Activated CD8-positive, alpha-beta T cell treated with anti-CD3 and anti-CD28 coated beads, Interleukin-2, amount 10 ng/mL, durations not matched to agents 7 days and 5 days (primary cell): ENCODE measurements at regions of chr12 and their contacts with region 1.

Region 1: GRCh38 chr12:57744777-57745484 is at the start of gene TSPAN31:
- DNase-seq: peak; percentile 98
- ATAC-seq: peak; percentile 80
- H3K4me3 Mint-ChIP-seq: peak within 1 kb of the TSS; percentile 92
- H3K27ac Mint-ChIP-seq: peak within 1 kb of the TSS; percentile 94
- H3K4me1 Mint-ChIP-seq: peaks cover 53% of the 10 kb centered on the region
- H3K27me3 Mint-ChIP-seq: no peaks in the 10 kb centered on the region
- total RNA-seq, gene TSPAN31: 12.9 to 13.3 TPM

Region 2: GRCh38 chr12:56947633-56948456 is 797.1 kb before region 1 on chr12:
- CTCF ChIA-PET with region 1: no interaction called
- POLR2A ChIA-PET with region 1: no interaction called
- DNase-seq: no peak
- ATAC-seq: no peak
- H3K4me3 Mint-ChIP-seq: no peak overlapping the region
- H3K27ac Mint-ChIP-seq: no peak overlapping the region
- H3K4me1 Mint-ChIP-seq: no peaks in the 10 kb centered on the region
- H3K27me3 Mint-ChIP-seq: peaks cover 31% of the 10 kb centered on the region

Region 3: DNA sequence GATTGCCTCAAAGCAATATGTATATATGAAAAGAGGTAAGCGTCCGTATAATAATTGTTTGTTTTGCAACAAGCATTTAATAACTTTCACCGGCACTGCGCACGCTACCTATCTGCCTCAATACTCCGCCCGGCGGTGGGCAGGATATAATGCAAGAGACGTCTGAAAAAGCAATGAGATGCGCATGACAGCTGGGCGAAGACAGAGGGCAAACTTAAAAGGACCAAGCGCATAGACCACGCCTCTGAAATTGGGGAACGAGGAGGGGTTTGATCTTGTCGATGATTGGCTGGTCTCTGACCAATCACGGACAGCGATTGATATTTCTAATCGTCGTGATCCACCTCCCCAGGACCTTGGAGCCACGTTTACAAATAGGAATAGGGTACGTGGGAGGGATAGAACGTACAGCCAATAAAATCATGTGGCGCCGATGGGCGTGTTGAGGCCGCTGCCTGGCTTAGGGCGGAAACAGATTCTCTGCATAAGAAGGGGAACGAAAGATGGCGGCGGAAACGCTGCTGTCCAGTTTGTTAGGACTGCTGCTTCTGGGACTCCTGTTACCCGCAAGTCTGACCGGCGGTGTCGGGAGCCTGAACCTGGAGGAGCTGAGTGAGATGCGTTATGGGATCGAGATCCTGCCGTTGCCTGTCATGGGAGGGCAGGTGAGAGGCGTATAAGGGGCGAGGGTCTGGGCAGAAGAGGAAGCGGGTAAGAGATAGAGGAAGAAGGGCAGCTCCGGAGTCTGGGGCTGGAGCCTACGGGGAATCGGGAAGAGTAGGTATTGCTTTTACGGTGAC is 51.1 kb before region 1 on chr12 and contains the start of gene OS9:
- CTCF ChIA-PET with region 1: interaction called, 12 read pairs
- POLR2A ChIA-PET with region 1: interaction called, 3 read pairs
- DNase-seq: peak; percentile 99
- ATAC-seq: peak; percentile 99
- H3K4me3 Mint-ChIP-seq: no peak within 1 kb of the TSS
- H3K27ac Mint-ChIP-seq: no peak within 1 kb of the TSS
- H3K4me1 Mint-ChIP-seq: peaks cover 2% of the 10 kb centered on the region
- H3K27me3 Mint-ChIP-seq: peaks cover 11% of the 10 kb centered on the region
- total RNA-seq, gene OS9: 100 to 107 TPM

Region 4: DNA sequence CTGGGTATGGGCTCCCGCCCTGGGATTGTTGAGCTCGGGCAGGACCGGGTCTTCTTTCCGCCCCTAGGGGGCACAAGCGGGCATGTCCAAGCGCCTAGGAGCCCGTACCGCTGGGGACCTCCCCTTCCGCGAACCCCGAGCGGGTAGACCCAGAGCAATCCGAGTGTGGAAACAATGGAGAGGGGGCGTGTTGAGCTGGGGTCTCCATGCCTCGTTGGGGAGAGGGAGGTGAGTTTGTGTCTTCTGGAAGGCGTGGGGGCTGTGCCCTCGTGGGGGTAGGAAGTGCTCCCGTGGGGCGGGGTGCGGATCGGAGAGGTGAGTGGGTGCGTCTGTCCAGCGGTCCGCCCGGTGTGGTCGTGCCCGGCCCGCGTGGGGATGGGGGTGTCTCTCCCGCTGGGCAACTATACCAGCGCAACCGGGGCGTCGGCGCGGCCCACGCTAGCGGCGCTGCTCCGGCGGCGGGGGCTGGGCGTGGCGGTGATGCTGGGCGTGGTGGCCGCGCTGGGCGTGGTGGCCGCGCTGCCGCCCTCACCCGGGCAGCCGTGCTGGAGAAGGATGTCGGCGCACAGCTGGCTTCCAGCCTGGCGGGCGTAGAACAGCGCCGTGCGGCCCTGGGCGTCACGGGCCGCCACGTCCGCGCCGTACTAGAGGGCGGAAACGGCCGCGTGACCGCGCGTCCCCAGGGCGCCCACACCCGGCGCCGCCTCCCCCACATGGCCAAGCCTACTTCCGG is 18.6 kb before region 1 on chr12:
- CTCF ChIA-PET with region 1: interaction called, 10 read pairs
- POLR2A ChIA-PET with region 1: interaction called, 5 read pairs
- DNase-seq: peak; percentile 44
- ATAC-seq: no peak
- H3K4me3 Mint-ChIP-seq: peak overlapping the region; percentile 28
- H3K27ac Mint-ChIP-seq: peak overlapping the region; percentile 61
- H3K4me1 Mint-ChIP-seq: peaks cover 12% of the 10 kb centered on the region
- H3K27me3 Mint-ChIP-seq: no peaks in the 10 kb centered on the region